ENCODE measurements at regions of chr5 and their contacts with region 1.

Region 1: GRCh38 chr5:123610665-123611405 is 98.9 kb downstream of the CSNK1G3 start:
- DNase-seq: peak; percentile 17
- ATAC-seq: peak; percentile 81
- H3K4me3 ChIP-seq: no peak overlapping the region
- H3K27ac ChIP-seq: no peak overlapping the region
- H3K4me1 ChIP-seq: peaks cover under 1% of the 10 kb centered on the region; the same call in 1 of the 2 replicates
- H3K27me3 ChIP-seq: no peaks in the 10 kb centered on the region
- CTCF ChIP-seq: peak; percentile 89 to 96 (median 91)
- EP300 ChIP-seq: no peak
- POLR2A ChIP-seq: no peak
- RAD21 ChIP-seq: peak; percentile 99

Region 2: GRCh38 chr5:122515709-122516431 is 1095.0 kb before region 1 on chr5:
- CTCF ChIA-PET with region 1: interaction called, 4 read pairs
- POLR2A ChIA-PET with region 1: no interaction called
- RAD21 ChIA-PET with region 1: no interaction called
- SMC1A ChIA-PET with region 1: interaction called, 4 read pairs
- in situ Hi-C with region 1: loop called (anchors 25 kb)
- intact Hi-C with region 1: loop called (anchors 5 kb)
- DNase-seq: no peak
- ATAC-seq: peak; percentile 88
- H3K4me3 ChIP-seq: no peak overlapping the region
- H3K27ac ChIP-seq: no peak overlapping the region
- H3K4me1 ChIP-seq: no peaks in the 10 kb centered on the region
- H3K27me3 ChIP-seq: no peaks in the 10 kb centered on the region
- CTCF ChIP-seq: peak; percentile 67 to 78 (median 74); a peak in 5 of 6 replicates
- EP300 ChIP-seq: no peak
- POLR2A ChIP-seq: no peak
- RAD21 ChIP-seq: peak; percentile 97

Region 3: GRCh38 chr5:123371575-123372179 is 239.2 kb before region 1 on chr5:
- CTCF ChIA-PET with region 1: interaction called, 20 read pairs
- POLR2A ChIA-PET with region 1: no interaction called
- RAD21 ChIA-PET with region 1: interaction called, 10 read pairs
- SMC1A ChIA-PET with region 1: interaction called, 18 read pairs
- in situ Hi-C with region 1: no loop called
- intact Hi-C with region 1: loop called (anchors 5 kb)
- DNase-seq: no peak
- ATAC-seq: no peak
- H3K4me3 ChIP-seq: no peak overlapping the region
- H3K27ac ChIP-seq: no peak overlapping the region
- H3K4me1 ChIP-seq: no peaks in the 10 kb centered on the region
- H3K27me3 ChIP-seq: no peaks in the 10 kb centered on the region
- CTCF ChIP-seq: peak; percentile 26 to 40 (median 40); a peak in 4 of 6 replicates
- EP300 ChIP-seq: no peak
- POLR2A ChIP-seq: no peak
- RAD21 ChIP-seq: 0 out of 2 replicates have a peak, but pooled peaks have one; percentile 4

Region 4: DNA sequence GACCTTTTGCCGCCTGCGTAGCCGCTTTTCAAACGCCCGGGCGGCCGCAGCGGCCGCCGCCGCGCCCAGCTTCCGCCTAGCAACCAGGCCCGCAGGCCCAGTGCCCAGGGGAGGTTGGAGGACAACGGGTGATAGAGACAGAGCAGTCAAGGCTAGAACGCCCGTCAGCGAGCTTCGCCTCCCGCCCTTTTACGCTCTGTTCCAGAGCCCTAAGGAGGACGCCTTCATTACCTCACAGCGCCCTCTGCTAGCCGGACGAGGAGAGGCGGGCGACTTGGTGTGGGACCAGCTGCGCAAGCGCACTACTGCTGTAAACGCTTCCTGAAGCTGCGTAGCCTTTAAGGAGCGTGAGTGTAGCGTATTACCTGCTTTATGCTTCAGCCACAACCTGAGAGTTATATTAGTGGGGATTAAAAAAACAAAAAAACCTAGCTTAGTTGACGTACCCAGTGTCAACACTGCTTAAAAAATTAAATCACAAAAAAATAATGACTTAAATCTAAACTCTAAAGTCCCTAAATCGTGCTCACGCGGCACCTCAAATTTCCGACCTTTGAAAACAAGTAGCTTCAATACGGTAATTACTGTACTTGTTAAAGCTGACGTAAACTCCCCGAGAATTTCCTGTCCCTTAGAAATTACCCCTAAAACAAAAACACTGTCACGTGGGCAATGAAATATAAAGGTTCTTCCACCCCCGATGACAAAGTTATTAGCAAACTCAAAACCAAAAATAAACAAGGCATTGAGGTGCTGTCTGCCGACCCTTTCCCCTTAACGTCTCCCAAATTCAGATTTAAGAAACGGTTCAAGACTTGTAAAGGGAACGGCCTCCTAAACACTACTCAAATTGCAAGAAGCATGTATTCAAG is 187.3 kb before region 1 on chr5 and contains the start of gene CEP120:
- CTCF ChIA-PET with region 1: interaction called, 32 read pairs
- POLR2A ChIA-PET with region 1: interaction called, 4 read pairs
- RAD21 ChIA-PET with region 1: interaction called, 27 read pairs
- SMC1A ChIA-PET with region 1: interaction called, 47 read pairs
- in situ Hi-C with region 1: loop called (anchors 25 kb)
- intact Hi-C with region 1: loop called (anchors 1 kb)
- DNase-seq: peak; percentile 98
- ATAC-seq: peak; percentile 97
- H3K4me3 ChIP-seq: peak within 1 kb of the TSS; percentile 83
- H3K27ac ChIP-seq: peak within 1 kb of the TSS; percentile 81
- H3K4me1 ChIP-seq: no peaks in the 10 kb centered on the region; the same call in 1 of the 2 replicates
- H3K27me3 ChIP-seq: no peaks in the 10 kb centered on the region
- CTCF ChIP-seq: peak; percentile 81 to 99 (median 95); a peak in 5 of 6 replicates
- EP300 ChIP-seq: peak in 1 of 2 experiments; percentile 44; a peak in 1 of 4 replicates
- POLR2A ChIP-seq: peak; percentile 91
- RAD21 ChIP-seq: peak; percentile 65
- polyA plus RNA-seq, gene CEP120: 4.1 to 4.3 TPM

Region 5: GRCh38 chr5:123559434-123559775 is 51.4 kb before region 1 on chr5:
- CTCF ChIA-PET with region 1: interaction called, 4 read pairs
- POLR2A ChIA-PET with region 1: no interaction called
- RAD21 ChIA-PET with region 1: interaction called, 3 read pairs
- SMC1A ChIA-PET with region 1: interaction called, 10 read pairs
- in situ Hi-C with region 1: no loop called
- intact Hi-C with region 1: no loop called
- DNase-seq: no peak
- ATAC-seq: no peak
- H3K4me3 ChIP-seq: no peak overlapping the region
- H3K27ac ChIP-seq: no peak overlapping the region
- H3K4me1 ChIP-seq: no peaks in the 10 kb centered on the region
- H3K27me3 ChIP-seq: no peaks in the 10 kb centered on the region
- CTCF ChIP-seq: no peak
- EP300 ChIP-seq: no peak
- POLR2A ChIP-seq: no peak
- RAD21 ChIP-seq: no peak

Region 6: GRCh38 chr5:124162779-124163532 is 552.1 kb after region 1 on chr5:
- CTCF ChIA-PET with region 1: no interaction called
- POLR2A ChIA-PET with region 1: no interaction called
- RAD21 ChIA-PET with region 1: no interaction called
- SMC1A ChIA-PET with region 1: no interaction called
- in situ Hi-C with region 1: no loop called
- intact Hi-C with region 1: no loop called
- DNase-seq: no peak
- ATAC-seq: no peak
- H3K4me3 ChIP-seq: no peak overlapping the region
- H3K27ac ChIP-seq: no peak overlapping the region
- H3K4me1 ChIP-seq: no peaks in the 10 kb centered on the region
- H3K27me3 ChIP-seq: no peaks in the 10 kb centered on the region
- CTCF ChIP-seq: no peak
- EP300 ChIP-seq: no peak
- POLR2A ChIP-seq: no peak
- RAD21 ChIP-seq: no peak

Region 7: DNA sequence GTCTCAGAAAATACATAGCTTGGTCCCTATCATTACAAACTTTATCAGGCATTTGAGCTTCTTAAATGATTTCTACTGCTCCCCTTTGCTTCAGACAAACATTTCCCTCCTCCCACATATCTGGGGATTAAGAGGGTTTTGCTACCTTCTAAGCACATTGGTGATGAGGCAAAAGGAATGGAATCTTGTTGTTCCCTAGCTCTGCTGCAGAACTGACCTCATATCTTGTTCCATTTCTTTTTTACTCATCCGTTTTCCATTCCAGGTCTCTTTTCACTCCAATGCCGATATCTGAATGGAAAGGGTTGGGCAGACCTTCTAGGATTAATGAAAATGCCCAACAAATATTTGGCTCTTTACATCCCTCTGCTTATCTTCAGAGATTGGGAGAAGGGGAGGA is 691.0 kb after region 1 on chr5:
- CTCF ChIA-PET with region 1: no interaction called
- POLR2A ChIA-PET with region 1: no interaction called
- RAD21 ChIA-PET with region 1: no interaction called
- SMC1A ChIA-PET with region 1: no interaction called
- in situ Hi-C with region 1: no loop called
- intact Hi-C with region 1: no loop called
- DNase-seq: no peak
- ATAC-seq: no peak
- H3K4me3 ChIP-seq: no peak overlapping the region
- H3K27ac ChIP-seq: no peak overlapping the region
- H3K4me1 ChIP-seq: no peaks in the 10 kb centered on the region
- H3K27me3 ChIP-seq: no peaks in the 10 kb centered on the region; a peak in 1 of 4 replicates
- CTCF ChIP-seq: no peak
- EP300 ChIP-seq: no peak
- POLR2A ChIP-seq: no peak
- RAD21 ChIP-seq: no peak

Measured in GM12878 (cell line).